T-cell (primary cell): ENCODE measurements at regions of chrX and their contacts with region 1.

Region 1: GRCh38 chrX:71365876-71366673 is at the start of gene TAF1:
- DNase-seq: peak; percentile 65 to 96 (median 93)
- ATAC-seq: peak; percentile 89 to 90 (median 89)
- H3K4me3 ChIP-seq: peak within 1 kb of the TSS; percentile 69 to 89
- H3K4me3 Mint-ChIP-seq: peak within 1 kb of the TSS; percentile 83 to 99 (median 95)
- H3K27ac ChIP-seq: peak within 1 kb of the TSS; percentile 86
- H3K27ac Mint-ChIP-seq: peak within 1 kb of the TSS; percentile 97 to 100
- H3K4me1 ChIP-seq: peaks cover 6 to 30% of the 10 kb centered on the region in 2 experiments
- H3K4me1 Mint-ChIP-seq: peaks cover 21 to 33% (median 29%) of the 10 kb centered on the region in 3 donors
- H3K27me3 ChIP-seq: no peaks in the 10 kb centered on the region
- H3K27me3 Mint-ChIP-seq: no peaks in the 10 kb centered on the region
- total RNA-seq, gene TAF1: 61.4 to 70.0 (median 63.3) TPM

Region 2: GRCh38 chrX:71085900-71086299 is 280.2 kb before region 1 on chrX:
- CTCF ChIA-PET with region 1: no interaction called
- POLR2A ChIA-PET with region 1: no interaction called
- DNase-seq: no peak
- ATAC-seq: no peak
- H3K4me3 ChIP-seq: no peak overlapping the region
- H3K4me3 Mint-ChIP-seq: no peak overlapping the region
- H3K27ac ChIP-seq: no peak overlapping the region
- H3K27ac Mint-ChIP-seq: no peak overlapping the region
- H3K4me1 ChIP-seq: peaks cover 0 to 5% of the 10 kb centered on the region in 2 experiments
- H3K4me1 Mint-ChIP-seq: peaks cover 0 to 8% (median 6%) of the 10 kb centered on the region in 3 donors
- H3K27me3 ChIP-seq: no peaks in the 10 kb centered on the region
- H3K27me3 Mint-ChIP-seq: no peaks in the 10 kb centered on the region

Region 3: GRCh38 chrX:71111141-71111843 is 254.8 kb before region 1 on chrX and contains the start of gene IL2RG:
- CTCF ChIA-PET with region 1: no interaction called
- POLR2A ChIA-PET with region 1: interaction called in 1 of 2 experiments, 13 read pairs
- DNase-seq: peak; percentile 35 to 90 (median 79)
- ATAC-seq: peak; percentile 87 to 91 (median 91)
- H3K4me3 ChIP-seq: peak within 1 kb of the TSS; percentile 94
- H3K4me3 Mint-ChIP-seq: peak within 1 kb of the TSS; percentile 95 to 99 (median 97)
- H3K27ac ChIP-seq: peak within 1 kb of the TSS; percentile 99
- H3K27ac Mint-ChIP-seq: peak within 1 kb of the TSS; percentile 97 to 99
- H3K4me1 ChIP-seq: peaks cover 17 to 56% of the 10 kb centered on the region in 2 experiments
- H3K4me1 Mint-ChIP-seq: peaks cover 54 to 68% (median 60%) of the 10 kb centered on the region in 3 donors
- H3K27me3 ChIP-seq: no peaks in the 10 kb centered on the region
- H3K27me3 Mint-ChIP-seq: no peaks in the 10 kb centered on the region
- total RNA-seq, gene IL2RG: 285 to 380 (median 312) TPM

Region 4: DNA sequence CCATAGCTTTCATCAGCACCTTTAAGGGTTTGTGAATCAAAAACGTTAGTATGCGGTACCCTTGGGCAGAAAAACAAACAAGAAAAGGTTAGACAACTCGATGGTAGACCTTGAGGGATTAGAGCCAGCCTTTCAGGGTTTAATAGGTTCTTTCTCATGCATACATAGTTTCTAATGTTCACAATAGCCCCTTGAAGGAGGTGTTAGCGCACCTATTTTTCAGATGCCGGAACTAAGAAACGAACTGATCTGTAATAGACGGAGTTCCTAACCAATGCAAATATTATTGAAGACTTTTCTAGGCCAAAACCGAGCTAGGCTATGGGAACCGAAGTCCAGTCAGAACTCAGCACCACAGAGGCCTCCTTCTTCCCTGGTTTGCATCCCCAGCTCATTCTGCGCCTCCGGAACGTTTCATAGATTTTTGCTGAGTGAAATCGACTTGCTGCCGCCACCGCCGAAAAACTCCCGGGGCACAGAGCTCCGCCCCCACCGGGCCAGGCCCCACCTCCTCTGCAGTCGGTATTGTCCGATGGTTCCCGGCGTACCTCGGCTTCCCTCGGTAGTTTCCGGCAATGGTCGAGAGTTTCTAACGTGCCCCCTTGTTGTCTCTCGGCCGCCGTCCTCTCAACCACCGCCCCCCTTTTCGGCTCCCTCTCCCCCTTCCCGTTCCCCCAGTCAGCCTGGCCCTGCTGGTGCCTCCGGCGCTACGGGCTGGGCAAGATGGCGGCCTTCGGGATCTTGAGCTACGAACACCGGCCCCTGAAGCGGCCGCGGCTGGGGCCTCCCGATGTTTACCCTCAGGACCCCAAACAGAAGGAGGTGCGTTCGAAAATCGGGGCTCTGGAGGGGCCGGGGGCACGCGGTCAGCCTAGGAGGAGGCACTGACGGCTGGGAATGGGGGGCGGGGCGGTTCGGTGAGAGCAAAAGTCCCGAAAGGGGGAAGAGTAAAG is 247.8 kb before region 1 on chrX and contains the start of gene MED12:
- CTCF ChIA-PET with region 1: no interaction called
- POLR2A ChIA-PET with region 1: interaction called in 1 of 2 experiments, 21 read pairs
- DNase-seq: peak; percentile 56 to 84 (median 75)
- ATAC-seq: peak; percentile 93 to 96 (median 94)
- H3K4me3 ChIP-seq: peak within 1 kb of the TSS; percentile 69 to 82
- H3K4me3 Mint-ChIP-seq: peak within 1 kb of the TSS; percentile 80 to 84 (median 81)
- H3K27ac ChIP-seq: peak within 1 kb of the TSS; percentile 89
- H3K27ac Mint-ChIP-seq: peak within 1 kb of the TSS; percentile 90 to 91
- H3K4me1 ChIP-seq: peaks cover 7 to 46% of the 10 kb centered on the region in 2 experiments
- H3K4me1 Mint-ChIP-seq: peaks cover 25 to 40% (median 33%) of the 10 kb centered on the region in 3 donors
- H3K27me3 ChIP-seq: no peaks in the 10 kb centered on the region
- H3K27me3 Mint-ChIP-seq: peaks cover 0 to 4% of the 10 kb centered on the region in 2 donors
- total RNA-seq, gene MED12: 63.8 to 78.3 (median 72.0) TPM

Region 5: GRCh38 chrX:71254092-71254941 is 111.8 kb before region 1 on chrX and contains the start of gene ZMYM3:
- CTCF ChIA-PET with region 1: interaction called in 1 of 2 experiments, 11 read pairs
- POLR2A ChIA-PET with region 1: interaction called, 7 to 8 read pairs
- DNase-seq: peak; percentile 55 to 85 (median 76)
- ATAC-seq: peak; percentile 83 to 88 (median 84)
- H3K4me3 ChIP-seq: peak within 1 kb of the TSS; percentile 67 to 86
- H3K4me3 Mint-ChIP-seq: peak within 1 kb of the TSS; percentile 89 to 92 (median 89)
- H3K27ac ChIP-seq: peak within 1 kb of the TSS; percentile 90
- H3K27ac Mint-ChIP-seq: peak within 1 kb of the TSS; percentile 89 to 93
- H3K4me1 ChIP-seq: peaks cover 0 to 26% of the 10 kb centered on the region in 2 experiments
- H3K4me1 Mint-ChIP-seq: peaks cover 21 to 34% (median 26%) of the 10 kb centered on the region in 3 donors
- H3K27me3 ChIP-seq: no peaks in the 10 kb centered on the region
- H3K27me3 Mint-ChIP-seq: no peaks in the 10 kb centered on the region
- total RNA-seq, gene ZMYM3: 23.6 to 32.4 (median 28.7) TPM

Region 6: DNA sequence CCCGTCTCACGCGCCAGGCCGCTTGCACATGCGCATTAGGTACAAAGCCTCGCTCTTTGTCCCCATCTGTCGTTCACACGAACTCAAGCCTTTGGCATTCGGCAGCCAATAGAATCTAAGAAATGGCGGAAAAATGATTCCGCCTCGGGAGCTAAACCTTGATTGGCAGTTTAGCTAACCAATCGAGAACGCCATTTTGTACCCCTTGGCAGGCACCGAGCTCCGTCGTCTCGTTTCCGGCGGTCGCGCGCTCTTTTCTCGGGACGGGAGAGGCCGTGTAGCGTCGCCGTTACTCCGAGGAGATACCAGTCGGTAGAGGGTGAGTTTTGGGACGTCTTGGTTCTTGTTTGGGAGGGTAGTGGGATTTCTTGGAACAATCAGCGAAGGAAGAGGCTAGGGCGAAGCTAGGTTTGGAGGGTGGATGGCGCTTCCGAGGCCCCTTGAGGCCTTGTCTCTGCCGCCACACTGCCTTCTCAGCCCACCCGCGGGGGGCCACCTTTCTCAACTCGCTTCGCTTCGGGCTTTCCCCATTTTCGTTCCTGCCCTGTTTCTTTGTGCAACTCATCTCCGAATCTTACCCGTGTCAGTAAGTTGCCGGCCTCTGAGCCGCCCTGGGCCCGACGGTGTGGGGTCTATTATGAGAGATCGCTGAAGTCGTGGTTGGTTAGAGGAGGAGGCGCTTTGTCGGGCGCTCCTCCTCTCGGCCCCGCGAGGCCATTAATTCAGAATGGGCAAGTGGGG is 82.5 kb before region 1 on chrX and contains the start of gene NONO:
- CTCF ChIA-PET with region 1: interaction called in 1 of 2 experiments, 7 read pairs
- POLR2A ChIA-PET with region 1: interaction called, 4 to 26 read pairs
- DNase-seq: peak; percentile 51 to 96 (median 81)
- ATAC-seq: peak; percentile 90 to 95 (median 92)
- H3K4me3 ChIP-seq: peak within 1 kb of the TSS; percentile 66 to 79
- H3K4me3 Mint-ChIP-seq: peak within 1 kb of the TSS; percentile 92 to 97 (median 97)
- H3K27ac ChIP-seq: peak within 1 kb of the TSS; percentile 96
- H3K27ac Mint-ChIP-seq: peak within 1 kb of the TSS; percentile 98 to 99
- H3K4me1 ChIP-seq: peaks cover 9 to 23% of the 10 kb centered on the region in 2 experiments
- H3K4me1 Mint-ChIP-seq: peaks cover 9 to 24% (median 19%) of the 10 kb centered on the region in 3 donors
- H3K27me3 ChIP-seq: no peaks in the 10 kb centered on the region
- H3K27me3 Mint-ChIP-seq: peaks cover 0 to 7% of the 10 kb centered on the region in 2 donors
- total RNA-seq, gene NONO: 322 to 419 (median 348) TPM